Activated CD8-positive, alpha-beta T cell treated with anti-CD3 and anti-CD28 coated beads, Interleukin-2, amount 10 ng/mL, durations not matched to agents 7 days and 5 days (primary cell): ENCODE measurements at regions of chr20 and their contacts with region 1.

Region 1: GRCh38 chr20:49534255-49534712 is 33.7 kb downstream of the PTGIS start:
- DNase-seq: peak; percentile 83
- ATAC-seq: peak; percentile 85
- H3K4me3 Mint-ChIP-seq: peak overlapping the region; percentile 34
- H3K27ac Mint-ChIP-seq: peak overlapping the region; percentile 81
- H3K4me1 Mint-ChIP-seq: peaks cover 21% of the 10 kb centered on the region
- H3K27me3 Mint-ChIP-seq: peaks cover 6% of the 10 kb centered on the region

Region 2: GRCh38 chr20:49377326-49377725 is 157.0 kb before region 1 on chr20:
- CTCF ChIA-PET with region 1: no interaction called
- POLR2A ChIA-PET with region 1: no interaction called
- DNase-seq: no peak
- ATAC-seq: no peak
- H3K4me3 Mint-ChIP-seq: no peak overlapping the region
- H3K27ac Mint-ChIP-seq: no peak overlapping the region
- H3K4me1 Mint-ChIP-seq: no peaks in the 10 kb centered on the region
- H3K27me3 Mint-ChIP-seq: peaks cover 10% of the 10 kb centered on the region

Region 3: DNA sequence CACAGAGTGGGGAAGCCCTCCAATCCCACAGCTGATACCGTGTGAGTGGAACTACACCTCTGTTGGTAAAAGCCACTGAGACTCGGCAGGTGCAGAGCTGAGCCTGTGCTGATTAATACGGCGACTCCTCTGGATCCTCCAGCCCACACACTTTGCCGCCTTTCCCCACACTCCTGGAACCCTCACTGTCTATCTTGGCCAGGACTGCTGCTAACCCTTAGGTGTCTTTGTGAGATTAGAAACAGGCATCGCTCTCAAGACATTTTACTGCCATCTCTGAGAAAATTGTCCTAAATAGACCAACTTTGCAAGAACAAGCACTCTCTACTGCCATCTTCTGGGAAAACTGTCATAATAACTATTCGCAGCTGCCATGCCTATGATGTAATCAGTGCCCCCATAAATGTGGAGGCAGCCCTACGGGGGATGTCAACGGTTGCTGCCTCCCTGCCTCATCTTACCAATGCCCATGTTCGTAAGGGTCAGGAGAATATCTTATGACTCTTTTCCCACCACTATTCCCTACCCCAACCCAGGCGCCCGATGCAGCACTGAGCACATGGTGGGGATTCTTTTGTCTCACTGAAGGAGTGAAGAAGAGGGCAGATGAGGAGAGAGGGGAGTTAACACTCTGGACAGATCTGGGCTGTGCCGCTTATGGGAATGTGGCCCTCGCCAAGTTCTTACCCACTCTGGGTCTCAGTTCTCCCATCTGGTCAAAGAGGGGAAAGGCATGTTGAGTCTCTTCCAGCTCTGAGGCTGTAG is 25.7 kb before region 1 on chr20:
- CTCF ChIA-PET with region 1: interaction called, 11 read pairs
- POLR2A ChIA-PET with region 1: interaction called, 3 read pairs
- DNase-seq: no peak
- ATAC-seq: peak; percentile 61
- H3K4me3 Mint-ChIP-seq: no peak overlapping the region
- H3K27ac Mint-ChIP-seq: no peak overlapping the region
- H3K4me1 Mint-ChIP-seq: no peaks in the 10 kb centered on the region
- H3K27me3 Mint-ChIP-seq: peaks cover 12% of the 10 kb centered on the region

Region 4: GRCh38 chr20:49631061-49631788 is 96.9 kb after region 1 on chr20:
- CTCF ChIA-PET with region 1: no interaction called
- POLR2A ChIA-PET with region 1: no interaction called
- DNase-seq: no peak
- ATAC-seq: no peak
- H3K4me3 Mint-ChIP-seq: no peak overlapping the region
- H3K27ac Mint-ChIP-seq: peak overlapping the region; percentile 54
- H3K4me1 Mint-ChIP-seq: peaks cover 10% of the 10 kb centered on the region
- H3K27me3 Mint-ChIP-seq: no peaks in the 10 kb centered on the region